Activated CD4-positive, alpha-beta T cell treated with anti-CD3 and anti-CD28 coated beads for 36 hours (primary cell): ENCODE measurements at regions of chr13 and their contacts with region 1.

Region 1: DNA sequence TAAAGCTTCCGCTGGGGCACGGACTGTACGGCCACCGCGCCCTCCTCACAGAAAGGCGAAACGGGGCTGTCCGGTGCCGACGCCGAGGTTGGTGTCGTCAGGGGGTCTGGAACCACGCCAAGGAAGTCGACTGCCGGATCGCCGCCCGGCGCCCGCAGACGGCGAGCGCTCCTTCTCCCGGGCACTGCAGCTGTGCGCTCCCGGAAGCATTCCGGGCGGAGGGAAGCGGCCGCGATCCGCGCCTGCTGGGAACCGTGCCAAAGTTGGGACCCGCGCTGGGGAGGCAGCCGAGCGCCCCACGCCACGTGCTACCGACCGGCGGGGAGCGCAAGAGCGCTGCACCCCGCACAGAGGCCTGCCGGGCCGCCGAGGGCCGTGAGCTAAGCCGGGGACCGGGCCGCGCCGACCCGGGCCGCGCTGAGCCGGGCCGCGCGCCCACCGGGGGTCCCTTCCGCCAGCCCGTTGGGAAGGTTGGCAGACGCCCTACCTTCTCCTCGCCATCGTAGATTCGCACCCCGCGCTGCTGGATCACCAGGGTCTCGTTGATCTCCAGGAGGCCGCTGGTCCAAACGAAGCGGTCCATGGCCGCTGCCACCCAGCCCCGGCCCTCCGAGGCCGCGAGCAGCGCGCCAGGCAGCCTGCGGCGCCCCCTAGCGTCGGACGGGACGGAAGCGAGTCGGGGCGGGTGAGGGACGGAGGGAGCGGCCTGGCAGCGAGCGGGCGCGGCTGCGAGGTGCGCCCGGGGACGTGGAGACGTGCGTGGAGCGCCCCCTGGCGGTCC is at the start of gene VPS36:
- DNase-seq: peak; percentile 96
- ATAC-seq: peak; percentile 77
- H3K4me3 Mint-ChIP-seq: peak within 1 kb of the TSS; percentile 88
- H3K27ac Mint-ChIP-seq: peak within 1 kb of the TSS; percentile 91
- H3K4me1 Mint-ChIP-seq: peaks cover 35% of the 10 kb centered on the region
- H3K27me3 Mint-ChIP-seq: peaks cover under 1% of the 10 kb centered on the region
- total RNA-seq, gene VPS36: 27.4 to 29.8 TPM

Region 2: DNA sequence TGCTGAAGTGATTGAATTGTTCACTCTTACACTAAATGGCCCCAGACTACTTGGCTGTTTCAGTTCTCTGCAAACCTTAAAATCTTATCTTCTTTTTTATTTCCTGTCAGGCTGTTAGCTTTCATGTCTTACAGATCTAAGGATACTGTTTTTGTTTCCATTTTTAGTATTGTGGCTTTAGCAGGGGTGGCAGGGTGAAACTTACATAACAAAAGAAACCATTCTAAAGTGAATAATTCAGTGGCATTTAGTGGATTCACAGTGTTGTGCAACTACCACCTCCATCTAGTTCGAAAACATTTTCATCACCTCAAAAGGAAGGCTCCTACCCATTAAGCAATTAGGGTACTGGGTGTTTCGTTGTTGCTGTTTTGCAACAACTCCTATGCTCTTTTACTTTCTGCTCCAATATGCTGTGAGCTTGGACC is 625.0 kb before region 1 on chr13:
- CTCF ChIA-PET with region 1: no interaction called
- POLR2A ChIA-PET with region 1: interaction called, 7 read pairs
- intact Hi-C with region 1: loop called (anchors 1 to 10 kb)
- DNase-seq: no peak
- ATAC-seq: peak; percentile 40
- H3K4me3 Mint-ChIP-seq: peak overlapping the region; percentile 69
- H3K27ac Mint-ChIP-seq: peak overlapping the region; percentile 92
- H3K4me1 Mint-ChIP-seq: peaks cover 91% of the 10 kb centered on the region
- H3K27me3 Mint-ChIP-seq: no peaks in the 10 kb centered on the region

Region 3: DNA sequence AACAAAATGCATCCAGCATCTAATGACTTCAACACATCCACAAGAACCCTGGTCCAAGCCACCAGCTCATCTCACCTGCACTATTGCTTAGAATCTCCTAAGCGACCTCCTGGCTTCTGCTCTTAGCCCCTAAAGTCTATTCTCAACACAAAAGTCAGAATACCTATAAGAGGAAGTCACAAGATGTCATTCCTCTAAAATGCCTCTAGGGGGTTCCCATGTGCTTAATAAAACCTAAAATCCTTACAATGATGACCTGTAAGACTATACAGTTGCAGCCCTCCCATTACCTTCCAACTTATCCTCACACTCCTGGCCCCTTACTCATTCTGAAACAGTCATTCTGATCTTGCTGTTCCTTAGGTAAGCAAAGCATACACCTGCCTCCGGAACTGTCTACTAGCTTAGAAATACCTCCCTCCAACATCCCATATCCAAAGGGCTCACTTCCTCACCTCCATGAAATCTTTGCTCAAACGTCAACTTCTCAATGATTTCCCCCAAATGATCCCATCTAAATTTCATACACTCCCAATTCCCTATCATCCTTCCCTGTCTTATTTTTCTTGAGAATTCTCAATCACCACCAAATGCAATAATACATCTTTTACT is 449.0 kb before region 1 on chr13:
- CTCF ChIA-PET with region 1: interaction called, 3 read pairs
- POLR2A ChIA-PET with region 1: no interaction called
- intact Hi-C with region 1: loop called in 1 of 2 experiments (anchors 1 kb)
- DNase-seq: no peak
- ATAC-seq: peak; percentile 89
- H3K4me3 Mint-ChIP-seq: no peak overlapping the region
- H3K27ac Mint-ChIP-seq: no peak overlapping the region
- H3K4me1 Mint-ChIP-seq: peaks cover 3% of the 10 kb centered on the region
- H3K27me3 Mint-ChIP-seq: peaks cover 4% of the 10 kb centered on the region

Region 4: GRCh38 chr13:52194184-52194868 is 255.9 kb before region 1 on chr13:
- CTCF ChIA-PET with region 1: interaction called, 8 read pairs
- POLR2A ChIA-PET with region 1: no interaction called
- intact Hi-C with region 1: loop called (anchors 1 to 2 kb)
- DNase-seq: peak; percentile 92
- ATAC-seq: peak; percentile 83
- H3K4me3 Mint-ChIP-seq: peak overlapping the region; percentile 86
- H3K27ac Mint-ChIP-seq: peak overlapping the region; percentile 100
- H3K4me1 Mint-ChIP-seq: peaks cover 32% of the 10 kb centered on the region
- H3K27me3 Mint-ChIP-seq: no peaks in the 10 kb centered on the region

Region 5: GRCh38 chr13:52432456-52432855 is 17.7 kb before region 1 on chr13:
- CTCF ChIA-PET with region 1: interaction called, 11 read pairs
- POLR2A ChIA-PET with region 1: interaction called, 4 read pairs
- intact Hi-C with region 1: no loop called
- DNase-seq: no peak
- ATAC-seq: no peak
- H3K4me3 Mint-ChIP-seq: no peak overlapping the region
- H3K27ac Mint-ChIP-seq: no peak overlapping the region
- H3K4me1 Mint-ChIP-seq: no peaks in the 10 kb centered on the region
- H3K27me3 Mint-ChIP-seq: no peaks in the 10 kb centered on the region

Region 6: GRCh38 chr13:52652196-52652979 is 202.2 kb after region 1 on chr13 and contains the start of gene SUGT1:
- CTCF ChIA-PET with region 1: interaction called, 9 read pairs
- POLR2A ChIA-PET with region 1: interaction called, 4 read pairs
- intact Hi-C with region 1: loop called (anchors 1 kb)
- DNase-seq: peak; percentile 97
- ATAC-seq: peak; percentile 96
- H3K4me3 Mint-ChIP-seq: no peak within 1 kb of the TSS
- H3K27ac Mint-ChIP-seq: no peak within 1 kb of the TSS
- H3K4me1 Mint-ChIP-seq: peaks cover 14% of the 10 kb centered on the region
- H3K27me3 Mint-ChIP-seq: no peaks in the 10 kb centered on the region
- total RNA-seq, gene SUGT1: 58.3 to 64.8 TPM